HEK293 (cell line): ENCODE measurements at regions of chr4 and their contacts with region 1.

Region 1: DNA sequence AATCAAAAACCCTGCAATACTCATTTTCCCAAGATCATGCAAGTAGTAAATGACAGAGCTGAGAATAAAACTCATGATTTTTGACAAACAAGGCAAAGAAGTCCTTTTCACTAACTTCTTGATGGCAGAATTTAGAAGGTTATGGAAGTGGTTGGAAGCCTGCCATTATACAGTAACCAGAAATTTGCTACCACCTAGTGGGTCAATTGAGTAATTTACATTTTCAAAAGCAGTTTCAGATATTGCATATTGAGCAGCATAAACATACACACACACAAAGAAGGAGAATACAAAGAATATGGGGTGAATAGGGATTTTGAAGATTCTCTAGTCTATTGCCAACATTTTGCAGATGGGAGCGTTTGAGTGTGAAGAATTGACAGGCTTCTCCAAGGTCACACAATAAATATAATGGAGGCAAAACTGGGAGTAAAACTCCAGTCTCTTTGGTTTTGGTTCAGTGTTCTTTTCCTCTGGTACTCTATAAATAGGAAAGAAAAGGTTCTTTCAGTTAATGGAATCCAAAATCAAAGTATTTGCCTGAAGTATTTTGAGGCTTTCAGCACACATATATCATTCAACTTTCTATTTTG is 70.2 kb downstream of the GC start:
- H3K4me3 ChIP-seq: no peak overlapping the region
- H3K27ac ChIP-seq: no peak overlapping the region
- H3K4me1 ChIP-seq: no peaks in the 10 kb centered on the region
- CTCF ChIP-seq: peak; percentile 10; the same call in 1 of the 2 replicates

Region 2: DNA sequence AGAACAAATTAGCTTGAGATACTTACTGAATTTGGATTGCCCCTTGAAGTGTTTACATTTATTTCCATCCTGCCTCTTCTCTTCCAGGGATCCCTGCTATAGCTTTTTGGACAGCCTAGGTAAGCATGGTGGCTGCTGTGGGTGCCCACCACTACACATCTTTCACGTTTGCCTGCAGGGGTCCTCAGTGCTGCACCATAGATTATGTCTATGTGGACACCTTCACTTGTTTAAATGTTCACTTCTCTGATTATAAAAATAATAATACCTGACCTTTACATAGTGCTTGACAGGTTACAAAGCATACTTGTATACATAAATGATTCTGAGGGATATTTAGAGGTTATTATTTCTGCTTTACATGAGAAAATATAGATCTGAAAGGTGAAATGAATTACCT is 442.8 kb before region 1 on chr4:
- CTCF ChIA-PET with region 1: interaction called, 17 read pairs
- POLR2A ChIA-PET with region 1: no interaction called
- H3K4me3 ChIP-seq: no peak overlapping the region
- H3K27ac ChIP-seq: no peak overlapping the region
- H3K4me1 ChIP-seq: 0 out of 2 replicates have a peak, but pooled peaks cover 2% of the 10 kb centered on the region
- CTCF ChIP-seq: no peak

Region 3: DNA sequence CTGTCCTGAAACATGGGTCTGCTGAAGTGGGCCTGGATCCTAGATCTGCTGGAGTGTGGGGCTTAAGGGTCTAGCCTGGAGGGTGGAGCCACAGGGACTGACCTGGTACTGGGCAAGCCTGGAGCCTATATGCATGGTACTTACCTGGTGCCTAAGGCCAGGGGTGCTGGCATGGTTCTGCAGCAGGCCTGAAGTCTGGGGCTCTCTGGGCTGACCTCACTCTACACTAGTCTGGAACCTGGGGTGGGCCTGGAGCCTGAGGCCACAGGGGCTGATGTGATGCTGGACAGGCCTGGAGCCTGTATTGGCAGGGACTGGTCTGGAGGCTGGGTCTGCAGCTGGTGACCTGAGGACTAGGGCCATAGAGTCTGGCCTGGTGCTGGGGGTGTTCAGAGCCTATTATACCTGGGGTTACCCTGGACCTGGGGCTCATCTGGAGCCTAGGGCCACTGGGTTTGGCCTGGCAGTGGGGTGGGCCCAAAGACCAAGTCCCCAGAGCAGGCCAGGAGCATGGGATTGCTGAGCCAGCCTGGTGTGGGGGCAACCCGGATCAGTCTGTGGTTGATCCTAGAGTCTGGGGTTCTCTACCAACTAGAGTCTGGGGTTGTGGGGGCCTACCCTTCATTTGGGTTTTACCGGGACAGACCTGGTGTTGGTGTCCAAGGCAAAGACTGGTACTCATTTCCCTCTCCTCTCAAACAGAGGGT is 195.3 kb before region 1 on chr4:
- CTCF ChIA-PET with region 1: no interaction called
- POLR2A ChIA-PET with region 1: no interaction called
- H3K4me3 ChIP-seq: no peak overlapping the region
- H3K27ac ChIP-seq: no peak overlapping the region
- H3K4me1 ChIP-seq: no peaks in the 10 kb centered on the region
- CTCF ChIP-seq: no peak

Region 4: DNA sequence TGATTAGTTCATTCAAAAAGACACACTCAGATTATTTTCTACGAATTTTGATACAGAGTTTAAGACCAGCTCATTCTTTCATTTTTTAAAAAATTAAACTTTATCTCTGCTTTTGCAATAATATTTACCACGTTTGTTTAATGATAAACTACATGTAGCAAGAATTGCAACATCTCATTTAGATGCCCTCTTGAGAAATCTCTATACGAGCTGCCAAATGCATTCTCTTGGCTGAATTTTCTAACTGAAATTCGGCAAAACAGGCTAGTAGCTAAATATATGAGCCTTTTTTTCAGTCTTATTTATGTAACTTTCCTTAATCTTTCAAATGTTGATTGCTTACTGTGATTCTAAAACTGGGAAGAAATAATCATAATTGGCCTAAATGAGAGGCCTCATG is 72.3 kb after region 1 on chr4:
- CTCF ChIA-PET with region 1: no interaction called
- POLR2A ChIA-PET with region 1: no interaction called
- H3K4me3 ChIP-seq: no peak overlapping the region
- H3K27ac ChIP-seq: no peak overlapping the region
- H3K4me1 ChIP-seq: peaks cover 2% of the 10 kb centered on the region; the same call in 1 of the 2 replicates
- CTCF ChIP-seq: no peak